Activated CD4-positive, alpha-beta memory T cell treated with anti-CD3 and anti-CD28 coated beads for 36 hours (primary cell): ENCODE measurements at regions of chr16 and their contacts with region 1.

Region 1: DNA sequence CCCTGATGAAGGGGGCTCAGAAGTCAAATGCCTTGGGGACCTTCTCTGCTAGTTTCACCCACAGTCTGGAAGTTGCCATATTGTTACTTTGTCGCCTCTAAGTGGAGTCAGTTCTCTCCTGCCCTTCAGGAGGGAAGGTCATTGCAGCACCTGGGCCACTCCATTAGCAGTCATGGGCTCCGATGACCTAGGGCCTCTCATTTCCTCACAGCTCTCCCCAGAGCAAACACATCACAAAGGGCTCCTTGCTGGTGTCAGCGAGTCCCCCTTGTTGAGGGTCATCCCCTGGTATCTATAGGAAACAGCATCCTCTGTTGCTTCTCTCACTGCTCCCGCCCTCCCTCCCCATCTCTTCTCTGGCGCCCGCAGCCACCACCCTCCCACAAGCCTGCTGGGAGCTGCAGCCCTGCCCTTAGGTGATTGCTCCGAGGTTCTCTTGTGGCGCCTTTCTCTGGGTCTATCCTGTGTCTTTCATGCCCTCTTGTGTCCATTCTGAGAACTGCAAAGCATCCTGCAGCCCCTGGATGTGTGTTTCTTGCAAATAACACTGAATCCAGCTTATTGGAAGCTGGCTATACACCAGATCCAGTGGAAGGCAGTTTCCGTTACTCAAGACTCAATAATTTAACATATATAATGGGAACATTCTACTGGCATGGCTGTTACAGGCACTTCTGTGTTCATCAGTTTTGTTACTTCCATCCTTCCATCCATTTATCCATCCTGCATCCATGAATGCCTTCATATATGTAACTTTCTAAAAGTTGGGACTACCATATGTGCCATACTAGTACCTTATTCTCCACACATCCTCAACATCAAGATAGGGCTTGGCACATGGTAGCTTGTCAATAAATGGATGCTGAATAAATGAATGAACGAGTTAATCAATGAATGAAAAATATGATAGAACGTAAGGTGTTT is 21.2 kb downstream of the PDILT start:
- DNase-seq: peak; percentile 60
- H3K4me3 Mint-ChIP-seq: no peak overlapping the region
- H3K27ac Mint-ChIP-seq: no peak overlapping the region
- H3K4me1 Mint-ChIP-seq: no peaks in the 10 kb centered on the region
- H3K27me3 Mint-ChIP-seq: peaks cover 3% of the 10 kb centered on the region

Region 2: GRCh38 chr16:19898924-19899604 is 484.3 kb before region 1 on chr16:
- CTCF ChIA-PET with region 1: interaction called, 37 read pairs
- POLR2A ChIA-PET with region 1: no interaction called
- intact Hi-C with region 1: loop called (anchors 2 kb)
- DNase-seq: peak; percentile 48
- H3K4me3 Mint-ChIP-seq: no peak overlapping the region
- H3K27ac Mint-ChIP-seq: no peak overlapping the region
- H3K4me1 Mint-ChIP-seq: peaks cover 2% of the 10 kb centered on the region
- H3K27me3 Mint-ChIP-seq: peaks cover 7% of the 10 kb centered on the region

Region 3: DNA sequence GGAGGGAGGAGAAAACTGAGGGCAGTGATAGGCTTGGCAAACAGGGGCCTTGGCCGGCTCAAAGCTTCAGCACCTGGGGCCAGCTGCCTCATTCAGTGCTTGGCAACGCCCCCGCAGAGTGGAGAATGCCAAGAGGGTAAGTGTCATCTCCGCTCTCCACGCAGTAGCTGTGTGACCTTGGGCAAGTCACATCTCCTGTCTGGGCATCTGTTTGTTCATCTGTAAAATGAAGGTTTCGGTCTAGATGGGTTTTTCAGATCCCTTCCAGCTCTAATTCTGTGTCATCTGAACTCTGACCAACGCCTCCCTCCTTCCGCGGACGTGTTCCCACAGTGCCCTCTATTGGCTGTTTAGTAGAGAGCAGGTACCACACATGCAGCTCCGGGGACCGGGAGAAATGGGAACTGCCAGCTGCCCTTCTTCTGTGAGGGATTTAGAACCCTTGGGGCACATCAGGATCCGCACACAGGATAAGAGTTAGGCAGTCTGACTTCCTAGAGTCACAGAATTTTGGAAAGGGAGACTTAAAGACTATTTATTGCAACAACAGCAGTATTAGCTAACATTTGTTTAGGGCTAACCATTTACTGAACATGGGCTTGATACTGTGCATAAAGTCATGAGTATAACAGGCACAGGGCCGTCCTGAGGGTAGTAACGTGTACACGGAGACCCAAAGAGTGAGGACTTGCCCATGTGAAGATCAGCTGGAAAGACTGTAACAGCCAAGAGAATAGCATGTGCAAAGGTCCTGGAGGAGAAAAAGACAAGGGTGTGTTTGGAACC is 82.9 kb before region 1 on chr16:
- CTCF ChIA-PET with region 1: interaction called, 25 read pairs
- POLR2A ChIA-PET with region 1: no interaction called
- intact Hi-C with region 1: no loop called
- DNase-seq: peak; percentile 52
- H3K4me3 Mint-ChIP-seq: no peak overlapping the region
- H3K27ac Mint-ChIP-seq: no peak overlapping the region
- H3K4me1 Mint-ChIP-seq: no peaks in the 10 kb centered on the region
- H3K27me3 Mint-ChIP-seq: peaks cover 4% of the 10 kb centered on the region

Region 4: DNA sequence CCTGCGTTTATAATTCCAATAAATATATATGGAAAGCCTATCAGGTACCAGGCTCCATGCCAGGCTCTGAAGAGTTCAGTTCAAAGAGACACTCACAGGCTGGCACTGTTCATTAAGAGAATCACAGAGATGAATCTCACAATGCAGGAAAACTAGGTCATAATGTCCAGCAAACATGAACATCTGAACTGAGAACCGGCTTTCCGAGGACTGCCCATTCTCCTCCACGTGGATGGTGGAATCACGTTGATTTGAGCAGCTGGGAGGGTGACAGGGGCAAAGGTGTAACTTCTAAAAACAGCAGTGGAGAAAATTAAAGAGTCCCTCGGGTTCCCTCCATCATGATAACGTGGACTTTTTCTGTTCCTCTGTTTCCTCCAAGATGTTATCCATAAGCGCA is 66.3 kb before region 1 on chr16:
- CTCF ChIA-PET with region 1: no interaction called
- POLR2A ChIA-PET with region 1: no interaction called
- intact Hi-C with region 1: no loop called
- DNase-seq: no peak
- H3K4me3 Mint-ChIP-seq: no peak overlapping the region
- H3K27ac Mint-ChIP-seq: no peak overlapping the region
- H3K4me1 Mint-ChIP-seq: no peaks in the 10 kb centered on the region
- H3K27me3 Mint-ChIP-seq: peaks cover 3% of the 10 kb centered on the region

Region 5: GRCh38 chr16:20372701-20373100 is 10.7 kb before region 1 on chr16:
- CTCF ChIA-PET with region 1: interaction called, 44 read pairs
- POLR2A ChIA-PET with region 1: no interaction called
- intact Hi-C with region 1: no loop called
- DNase-seq: no peak
- H3K4me3 Mint-ChIP-seq: no peak overlapping the region
- H3K27ac Mint-ChIP-seq: no peak overlapping the region
- H3K4me1 Mint-ChIP-seq: no peaks in the 10 kb centered on the region
- H3K27me3 Mint-ChIP-seq: peaks cover 7% of the 10 kb centered on the region

Region 6: GRCh38 chr16:20401475-20402016 is 18.2 kb after region 1 on chr16:
- CTCF ChIA-PET with region 1: interaction called, 45 read pairs
- POLR2A ChIA-PET with region 1: no interaction called
- intact Hi-C with region 1: no loop called
- DNase-seq: no peak
- H3K4me3 Mint-ChIP-seq: no peak overlapping the region
- H3K27ac Mint-ChIP-seq: no peak overlapping the region
- H3K4me1 Mint-ChIP-seq: no peaks in the 10 kb centered on the region
- H3K27me3 Mint-ChIP-seq: no peaks in the 10 kb centered on the region